Activated CD8-positive, alpha-beta memory T cell treated with anti-CD3 and anti-CD28 coated beads, Interleukin-2, amount 10 ng/mL, durations not matched to agents 7 days and 5 days (primary cell): ENCODE measurements at regions of chr4 and their contacts with region 1.

Region 1: DNA sequence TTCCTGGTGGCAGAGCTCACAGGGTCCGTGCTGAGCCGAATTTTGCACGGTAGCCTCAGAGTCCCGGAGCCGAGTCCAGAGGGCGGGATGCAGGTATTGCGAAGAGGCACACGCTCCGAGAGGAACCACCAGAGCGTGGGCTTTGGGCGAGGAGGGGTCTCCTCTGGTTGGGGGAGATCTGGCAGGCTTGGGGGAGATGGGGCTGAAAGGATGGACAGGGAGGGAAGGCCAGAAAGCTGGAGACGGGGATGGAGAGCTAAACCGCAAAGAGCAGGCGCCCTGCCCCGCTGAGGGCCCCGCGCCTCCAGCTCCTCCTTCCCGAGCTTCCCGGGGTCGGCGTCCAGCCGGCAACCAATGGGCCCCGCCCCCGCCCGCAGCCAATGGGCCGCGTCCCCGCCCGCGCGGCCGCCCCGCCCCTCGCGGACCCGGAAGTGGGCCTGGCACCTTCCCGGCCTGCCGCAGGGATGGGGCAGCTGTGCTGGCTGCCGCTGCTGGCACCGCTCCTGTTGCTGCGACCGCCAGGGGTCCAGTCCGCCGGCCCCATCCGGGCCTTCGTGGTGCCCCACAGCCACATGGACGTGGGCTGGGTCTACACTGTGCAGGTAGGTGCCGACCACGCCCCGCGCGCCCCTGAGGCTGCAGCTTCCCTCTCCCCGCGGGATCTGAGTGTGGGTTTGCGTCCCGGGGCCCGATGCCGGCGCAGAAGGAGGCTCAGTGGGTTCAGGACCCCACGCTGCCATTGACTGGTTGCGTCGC is at the start of gene MAN2B2:
- DNase-seq: peak; percentile 84
- ATAC-seq: peak; percentile 97
- H3K4me3 Mint-ChIP-seq: peak within 1 kb of the TSS; percentile 83
- H3K27ac Mint-ChIP-seq: peak within 1 kb of the TSS; percentile 85
- H3K4me1 Mint-ChIP-seq: peaks cover 12% of the 10 kb centered on the region
- H3K27me3 Mint-ChIP-seq: peaks cover 7% of the 10 kb centered on the region
- total RNA-seq, gene MAN2B2: 28.0 to 33.1 TPM

Region 2: DNA sequence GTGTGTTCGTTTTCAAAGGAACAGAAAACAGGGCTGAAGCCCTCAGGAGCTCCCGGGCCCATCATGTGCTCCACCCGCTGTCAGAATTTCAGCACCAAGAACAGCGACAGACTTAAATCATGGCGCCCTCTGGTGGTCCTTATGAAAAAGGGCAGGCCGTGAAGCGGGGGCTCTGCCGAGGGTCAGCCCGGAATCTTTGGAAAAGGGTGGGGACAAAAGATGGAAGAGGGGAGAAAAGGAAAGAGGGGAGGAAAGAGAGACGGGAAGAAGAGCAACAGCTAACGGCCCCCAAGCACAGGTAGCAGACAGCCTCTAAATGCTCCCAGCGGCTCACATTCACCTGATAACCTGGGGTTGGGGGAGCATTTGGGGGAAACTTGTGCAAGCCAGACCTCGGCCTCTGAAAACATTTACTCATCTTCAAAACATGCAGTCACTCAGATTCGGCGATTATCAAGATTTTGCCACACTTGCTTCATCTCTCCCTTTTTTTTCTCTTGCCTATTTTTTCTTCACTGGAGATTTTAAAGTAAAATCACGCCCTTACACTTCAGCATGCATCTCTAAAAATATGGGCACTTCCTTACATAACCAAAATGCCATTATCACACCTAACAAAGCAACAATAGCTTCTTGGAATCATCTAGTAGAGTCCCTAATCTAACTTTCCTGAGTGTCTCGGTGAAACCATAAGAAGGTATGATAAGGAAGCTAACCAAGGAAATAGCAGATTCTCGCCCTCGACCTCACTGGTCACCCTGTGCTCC is 28.1 kb before region 1 on chr4:
- CTCF ChIA-PET with region 1: interaction called, 11 read pairs
- DNase-seq: peak; percentile 63
- ATAC-seq: peak; percentile 57
- H3K4me3 Mint-ChIP-seq: no peak overlapping the region
- H3K27ac Mint-ChIP-seq: no peak overlapping the region
- H3K4me1 Mint-ChIP-seq: no peaks in the 10 kb centered on the region
- H3K27me3 Mint-ChIP-seq: peaks cover 7% of the 10 kb centered on the region